ENCODE measurements at regions of chr1 and their contacts with region 1.

Region 1: DNA sequence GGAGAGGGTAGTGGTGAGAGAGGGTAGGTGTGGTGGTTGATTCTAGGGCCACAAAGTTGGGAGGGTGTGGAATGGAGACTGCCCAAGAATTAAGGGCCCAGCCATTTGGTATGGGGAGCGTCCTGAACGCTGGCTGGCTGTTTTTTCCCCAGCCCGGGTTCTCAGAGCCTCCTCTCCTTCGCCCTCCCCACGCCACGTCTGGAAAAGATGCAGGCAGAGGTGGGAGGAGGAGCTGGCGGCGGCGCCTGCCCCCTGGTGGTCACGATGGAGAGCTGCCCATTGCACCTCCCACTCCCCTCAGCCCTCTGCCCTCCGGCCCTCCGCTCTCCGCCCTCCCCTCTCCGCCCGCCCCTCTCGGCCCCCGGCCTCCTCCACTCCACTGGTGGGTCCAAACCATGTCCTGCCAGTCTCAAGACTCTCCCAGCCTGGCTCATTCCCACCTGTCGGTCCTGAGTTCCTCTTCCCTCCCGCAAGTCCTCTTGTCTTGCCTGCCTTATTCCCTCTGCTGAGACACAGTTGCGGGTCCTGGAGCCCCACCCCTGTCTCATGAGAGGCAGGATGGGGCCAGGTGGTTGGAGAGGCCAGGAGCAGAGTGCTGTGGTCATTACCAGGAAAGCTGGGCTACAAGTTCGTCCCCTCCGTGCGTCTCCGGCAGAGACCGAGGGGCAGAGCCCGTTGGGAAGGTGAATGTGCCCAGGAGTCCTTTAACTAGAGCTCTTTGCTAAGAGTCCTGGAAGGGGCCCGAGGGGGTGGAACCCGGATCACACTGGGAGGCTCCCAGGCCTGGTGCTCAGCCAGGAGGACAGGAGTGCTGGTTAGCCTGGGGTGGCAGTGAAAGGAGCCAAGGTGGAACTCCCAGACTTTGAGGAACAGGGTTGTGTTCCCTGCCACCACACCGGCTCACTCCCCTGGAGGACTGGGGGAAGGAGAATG is 22.6 kb downstream of the ETNK2 start:
- DNase-seq: peak; percentile 83
- ATAC-seq: peak; percentile 90

Region 2: GRCh38 chr1:203871107-203871875 is 257.9 kb before region 1 on chr1:
- intact Hi-C with region 1: loop called (anchors 2 kb)
- DNase-seq: no peak
- ATAC-seq: peak; percentile 80

Region 3: GRCh38 chr1:204045430-204045829 is 83.8 kb before region 1 on chr1:
- intact Hi-C with region 1: no loop called
- DNase-seq: peak; percentile 57
- ATAC-seq: peak; percentile 42

Region 4: GRCh38 chr1:204074274-204075138 is 54.7 kb before region 1 on chr1:
- intact Hi-C with region 1: loop called (anchors 5 kb)
- DNase-seq: peak; percentile 89
- ATAC-seq: peak; percentile 65

Measured in Right ventricle myocardium superior (tissue), 1 donor.